MCF 10A (cell line): ENCODE measurements at regions of chr10 and their contacts with region 1.

Region 1: DNA sequence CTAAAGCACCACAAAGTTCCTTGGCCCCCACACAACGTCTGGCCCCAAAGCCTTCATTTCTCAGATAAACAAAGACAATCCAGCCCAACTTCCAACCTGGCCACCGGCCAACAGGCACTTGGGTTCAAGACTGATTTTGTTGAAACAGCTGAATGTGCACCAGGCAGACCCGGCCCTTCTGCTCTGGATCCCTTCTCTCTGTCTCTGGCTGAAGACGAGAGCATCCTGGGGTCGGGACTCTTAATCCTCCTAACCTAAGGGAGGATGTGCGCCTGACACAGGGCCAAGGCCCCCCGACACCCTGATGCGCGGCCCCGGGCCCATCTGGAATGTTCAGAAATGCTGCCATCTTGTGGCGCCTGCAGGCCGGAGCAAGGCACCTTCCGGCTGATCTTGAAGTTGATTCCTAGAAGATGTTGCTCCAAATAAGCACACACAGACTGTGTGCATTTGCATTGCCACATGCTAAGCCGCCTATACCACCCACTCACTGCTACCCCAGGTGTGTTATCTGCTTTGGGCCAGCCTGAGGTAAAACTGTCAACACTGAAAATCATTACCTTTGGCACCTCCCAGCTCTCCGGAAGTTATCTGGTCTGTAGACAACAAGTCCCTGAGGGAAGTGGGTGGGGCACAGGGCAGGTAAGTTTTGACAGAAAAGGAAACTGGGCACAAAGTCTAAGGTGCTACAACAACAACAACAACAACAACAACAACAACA is 98.4 kb upstream of the HABP2 start:
- DNase-seq: peak; percentile 41
- H3K4me3 Mint-ChIP-seq: no peak overlapping the region
- H3K27ac Mint-ChIP-seq: no peak overlapping the region
- H3K4me1 Mint-ChIP-seq: no peaks in the 10 kb centered on the region
- H3K27me3 Mint-ChIP-seq: peaks cover 52% of the 10 kb centered on the region
- CTCF ChIP-seq: peak; percentile 70

Region 2: DNA sequence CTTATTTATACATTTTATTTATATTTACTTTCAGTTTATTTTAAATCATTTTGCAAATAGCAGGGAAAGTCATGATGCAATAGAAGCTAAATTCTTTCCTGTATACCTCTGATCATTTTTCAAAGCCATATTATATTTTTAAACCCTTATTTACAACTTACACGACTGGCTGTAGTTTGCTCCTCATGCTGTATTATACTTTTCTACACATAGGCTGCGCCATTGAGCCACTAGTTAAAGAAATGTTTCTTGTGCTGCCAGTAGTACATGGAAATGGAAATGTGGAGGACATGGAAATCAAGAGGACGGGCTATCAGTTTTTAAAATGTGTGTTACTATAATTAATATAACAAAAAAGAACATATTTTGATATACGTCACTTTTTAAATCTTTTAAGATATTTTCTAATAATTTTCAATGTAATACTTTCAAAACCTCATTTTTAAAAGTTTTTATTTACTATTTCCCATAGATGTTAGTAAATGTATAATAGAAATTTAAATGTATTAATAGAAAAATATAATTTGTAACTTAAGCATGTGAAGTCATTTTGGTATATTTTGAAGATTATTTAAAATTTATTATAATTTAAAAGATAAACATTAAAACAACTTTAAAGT is 889.0 kb before region 1 on chr10:
- CTCF ChIA-PET with region 1: no interaction called
- POLR2A ChIA-PET with region 1: no interaction called
- intact Hi-C with region 1: loop called (anchors 10 kb)
- DNase-seq: peak; percentile 78
- H3K4me3 Mint-ChIP-seq: no peak overlapping the region
- H3K27ac Mint-ChIP-seq: no peak overlapping the region
- H3K4me1 Mint-ChIP-seq: no peaks in the 10 kb centered on the region
- H3K27me3 Mint-ChIP-seq: no peaks in the 10 kb centered on the region
- CTCF ChIP-seq: peak; percentile 80

Region 3: DNA sequence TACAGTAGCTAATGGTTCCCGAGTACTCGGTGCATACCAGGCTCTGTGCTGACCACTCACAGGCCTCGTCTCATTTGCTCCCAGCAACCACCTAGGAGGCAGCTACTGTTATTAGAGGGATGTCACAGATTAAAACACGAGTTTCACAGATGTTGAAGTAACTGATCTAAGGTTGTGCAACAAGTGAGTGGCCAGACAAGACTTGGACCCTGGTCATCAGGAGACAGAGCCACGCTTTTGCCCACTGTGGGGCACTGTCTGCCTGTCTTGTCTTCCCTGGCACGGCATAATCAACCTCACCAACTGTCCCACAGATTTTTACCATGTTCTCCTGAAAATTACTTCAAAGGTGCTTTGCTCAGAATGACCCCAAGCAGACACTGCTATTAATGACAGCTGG is 13.3 kb before region 1 on chr10:
- CTCF ChIA-PET with region 1: interaction called, 25 read pairs
- POLR2A ChIA-PET with region 1: interaction called, 3 read pairs
- intact Hi-C with region 1: no loop called
- DNase-seq: peak; percentile 4
- H3K4me3 Mint-ChIP-seq: no peak overlapping the region
- H3K27ac Mint-ChIP-seq: no peak overlapping the region
- H3K4me1 Mint-ChIP-seq: no peaks in the 10 kb centered on the region
- H3K27me3 Mint-ChIP-seq: peaks cover 55% of the 10 kb centered on the region
- CTCF ChIP-seq: no peak

Region 4: DNA sequence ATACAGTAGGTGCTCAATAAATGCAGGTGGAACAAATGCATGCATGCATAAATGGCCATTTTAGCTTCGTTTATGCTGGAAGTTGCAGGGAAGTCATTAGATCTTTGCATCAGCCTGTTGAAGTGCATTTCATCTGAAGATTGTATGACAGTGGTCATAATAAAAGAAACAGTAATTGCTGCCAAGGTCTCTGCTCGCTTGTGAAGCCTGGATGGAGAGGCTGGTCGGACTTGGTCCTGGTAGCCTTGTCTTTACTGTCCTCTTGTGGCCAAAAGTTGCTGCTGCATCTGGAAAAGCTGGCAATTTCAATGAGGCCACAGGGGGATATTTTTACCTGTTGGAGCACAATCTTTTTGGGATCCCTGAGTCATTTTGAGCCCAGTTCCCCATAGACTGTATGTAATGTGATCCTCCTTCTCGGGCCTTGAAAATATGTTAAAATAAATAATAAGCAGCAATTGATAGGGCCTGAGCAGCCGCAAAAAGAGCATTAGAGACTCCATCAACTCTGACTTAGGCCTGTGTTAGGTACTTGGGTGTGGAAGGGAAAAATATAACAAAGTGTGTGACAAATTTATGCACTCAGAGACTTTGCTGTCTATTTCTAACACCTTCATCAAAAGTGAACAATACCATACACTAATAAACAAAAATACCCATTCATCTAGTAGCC is 66.8 kb after region 1 on chr10:
- CTCF ChIA-PET with region 1: interaction called, 5 read pairs
- POLR2A ChIA-PET with region 1: no interaction called
- intact Hi-C with region 1: loop called (anchors 5 kb)
- DNase-seq: peak; percentile 69
- H3K4me3 Mint-ChIP-seq: no peak overlapping the region
- H3K27ac Mint-ChIP-seq: no peak overlapping the region
- H3K4me1 Mint-ChIP-seq: no peaks in the 10 kb centered on the region
- H3K27me3 Mint-ChIP-seq: peaks cover 35% of the 10 kb centered on the region
- CTCF ChIP-seq: peak; percentile 96

Region 5: GRCh38 chr10:113550365-113550764 is 95.9 kb after region 1 on chr10:
- CTCF ChIA-PET with region 1: no interaction called
- POLR2A ChIA-PET with region 1: no interaction called
- intact Hi-C with region 1: no loop called
- DNase-seq: peak; percentile 23
- H3K4me3 Mint-ChIP-seq: no peak overlapping the region
- H3K27ac Mint-ChIP-seq: no peak overlapping the region
- H3K4me1 Mint-ChIP-seq: no peaks in the 10 kb centered on the region
- H3K27me3 Mint-ChIP-seq: peaks cover 30% of the 10 kb centered on the region
- CTCF ChIP-seq: no peak

Region 6: GRCh38 chr10:113563306-113564088 is 109.0 kb after region 1 on chr10:
- CTCF ChIA-PET with region 1: interaction called, 4 read pairs
- POLR2A ChIA-PET with region 1: no interaction called
- intact Hi-C with region 1: loop called (anchors 10 kb)
- DNase-seq: peak; percentile 71
- H3K4me3 Mint-ChIP-seq: peak overlapping the region; percentile 70
- H3K27ac Mint-ChIP-seq: no peak overlapping the region
- H3K4me1 Mint-ChIP-seq: peaks cover 4% of the 10 kb centered on the region
- H3K27me3 Mint-ChIP-seq: peaks cover 12% of the 10 kb centered on the region
- CTCF ChIP-seq: peak; percentile 97